Activated CD8-positive, alpha-beta memory T cell treated with anti-CD3 and anti-CD28 coated beads, Interleukin-2, amount 10 ng/mL, durations not matched to agents 7 days and 5 days (primary cell): ENCODE measurements at regions of chr1 and their contacts with region 1.

Region 1: DNA sequence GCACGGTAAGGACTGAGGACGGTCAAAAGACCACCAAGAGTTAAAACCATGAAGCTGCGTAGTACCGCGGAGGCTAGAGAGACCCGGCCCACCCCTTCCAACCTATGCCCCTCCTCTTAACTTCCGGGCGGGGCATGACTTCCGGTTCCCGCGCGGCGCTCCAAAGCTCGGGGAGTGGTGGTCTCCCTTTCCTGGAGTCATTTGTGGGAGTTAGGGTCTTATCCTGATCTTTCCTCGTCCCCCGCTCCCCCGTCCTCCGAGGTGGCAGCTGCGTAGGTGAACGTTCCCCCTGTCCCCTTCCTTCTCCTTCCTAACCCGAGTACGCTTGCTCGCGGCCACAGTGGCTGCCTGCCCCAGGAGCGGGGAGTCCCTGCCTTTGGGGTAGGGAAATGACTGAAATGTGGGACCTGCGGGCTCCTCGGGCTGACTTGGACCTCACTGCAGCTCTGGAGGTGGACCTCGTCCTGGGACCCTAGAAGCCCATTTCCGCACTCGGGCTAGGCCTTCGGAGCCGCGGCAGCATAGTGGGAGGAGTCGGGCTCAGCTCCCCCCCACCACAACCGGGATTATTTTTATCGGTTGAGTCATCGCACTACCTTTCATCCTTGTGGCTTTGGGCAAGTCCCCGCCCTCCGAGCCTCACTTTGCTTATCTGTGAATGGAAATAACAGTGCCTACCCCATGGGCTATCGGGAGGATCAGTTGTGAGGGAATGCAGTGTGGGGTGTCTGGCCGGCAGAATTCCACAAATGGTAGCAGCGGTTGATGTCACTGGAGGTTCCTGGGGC is 24.1 kb downstream of the CELA3A start:
- DNase-seq: peak; percentile 93
- ATAC-seq: peak; percentile 67
- H3K4me3 Mint-ChIP-seq: peak overlapping the region; percentile 90
- H3K27ac Mint-ChIP-seq: peak overlapping the region; percentile 96
- H3K4me1 Mint-ChIP-seq: peaks cover 48% of the 10 kb centered on the region
- H3K27me3 Mint-ChIP-seq: no peaks in the 10 kb centered on the region

Region 2: DNA sequence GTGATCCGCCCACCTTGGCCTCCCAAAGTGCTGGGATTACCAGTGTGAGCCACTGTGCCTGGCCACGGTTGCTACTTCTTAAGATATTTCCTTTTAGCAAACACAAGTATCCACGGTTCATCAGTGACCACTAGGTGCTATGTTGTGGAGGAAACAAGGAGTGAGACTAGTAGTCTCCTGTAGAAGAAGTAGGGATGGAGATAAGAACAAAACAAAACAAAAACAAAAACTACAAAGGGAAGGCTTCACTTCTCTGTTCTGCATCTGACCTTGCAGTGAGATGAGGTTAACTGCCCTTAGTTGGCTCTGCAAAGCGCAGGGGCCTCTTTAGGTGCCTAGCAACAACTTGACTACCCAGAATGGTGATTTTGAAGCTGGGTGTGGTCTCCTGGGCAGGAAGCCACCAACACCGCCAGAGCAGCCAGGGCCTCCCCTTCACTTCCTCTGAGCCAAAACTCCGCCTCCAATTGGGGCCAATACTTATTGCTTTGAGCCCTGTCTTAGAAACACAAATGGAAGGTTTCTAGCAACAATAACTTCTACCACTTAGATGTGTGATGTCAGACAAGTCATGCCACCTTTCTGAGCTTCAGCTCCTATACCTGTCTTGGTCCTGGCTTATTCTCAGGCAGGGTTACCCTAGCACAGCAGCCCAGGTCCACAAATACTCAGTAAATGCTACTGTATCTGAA is 14.2 kb after region 1 on chr1:
- CTCF ChIA-PET with region 1: interaction called, 56 read pairs
- DNase-seq: peak; percentile 98
- ATAC-seq: peak; percentile 98
- H3K4me3 Mint-ChIP-seq: peak overlapping the region; percentile 77
- H3K27ac Mint-ChIP-seq: peak overlapping the region; percentile 92
- H3K4me1 Mint-ChIP-seq: peaks cover 41% of the 10 kb centered on the region
- H3K27me3 Mint-ChIP-seq: no peaks in the 10 kb centered on the region

Region 3: GRCh38 chr1:22052115-22053016 is 26.8 kb after region 1 on chr1 and contains the start of gene CDC42:
- CTCF ChIA-PET with region 1: interaction called, 96 read pairs
- DNase-seq: peak; percentile 98
- ATAC-seq: peak; percentile 95
- H3K4me3 Mint-ChIP-seq: peak within 1 kb of the TSS; percentile 99
- H3K27ac Mint-ChIP-seq: peak within 1 kb of the TSS; percentile 99
- H3K4me1 Mint-ChIP-seq: peaks cover 59% of the 10 kb centered on the region
- H3K27me3 Mint-ChIP-seq: no peaks in the 10 kb centered on the region
- total RNA-seq, gene CDC42: 254 to 340 TPM

Region 4: DNA sequence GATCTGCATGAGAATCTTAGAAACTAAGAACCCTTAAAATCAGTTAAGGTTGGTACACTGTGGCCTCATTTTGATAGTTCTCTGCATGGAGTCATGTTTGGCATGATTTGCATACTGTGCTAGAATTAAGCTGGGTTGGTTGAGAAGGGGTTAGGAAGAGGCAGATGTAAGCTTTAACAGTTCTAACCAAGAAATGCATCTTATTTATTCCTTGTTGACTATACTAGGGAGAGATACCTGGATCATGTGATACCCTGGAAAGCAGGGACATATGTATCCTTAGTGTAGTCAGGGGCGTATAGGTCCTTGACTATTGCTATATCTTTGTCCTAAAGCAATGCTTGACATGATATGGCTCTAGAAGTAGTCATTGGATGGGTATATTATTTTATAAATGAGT is 68.0 kb after region 1 on chr1:
- CTCF ChIA-PET with region 1: interaction called, 17 read pairs
- DNase-seq: no peak
- ATAC-seq: no peak
- H3K4me3 Mint-ChIP-seq: no peak overlapping the region
- H3K27ac Mint-ChIP-seq: no peak overlapping the region
- H3K4me1 Mint-ChIP-seq: peaks cover 61% of the 10 kb centered on the region
- H3K27me3 Mint-ChIP-seq: no peaks in the 10 kb centered on the region

Region 5: GRCh38 chr1:22105611-22106207 is 80.1 kb after region 1 on chr1:
- CTCF ChIA-PET with region 1: interaction called, 13 read pairs
- DNase-seq: no peak
- ATAC-seq: peak; percentile 41
- H3K4me3 Mint-ChIP-seq: no peak overlapping the region
- H3K27ac Mint-ChIP-seq: peak overlapping the region; percentile 89
- H3K4me1 Mint-ChIP-seq: peaks cover 43% of the 10 kb centered on the region
- H3K27me3 Mint-ChIP-seq: no peaks in the 10 kb centered on the region